Mucosa of descending colon (tissue), 3 donors: ENCODE measurements at regions of chr2 and their contacts with region 1.

Region 1: GRCh38 chr2:219073413-219074129 is 12.8 kb upstream of the IHH start:
- DNase-seq: peak in 1 of 3 donors; percentile 90
- ATAC-seq: peak; percentile 78
- H3K4me3 ChIP-seq: no peak overlapping the region
- H3K4me1 ChIP-seq: peaks cover 39% of the 10 kb centered on the region
- CTCF ChIP-seq: peak; percentile 47

Region 2: GRCh38 chr2:219119422-219120043 is 46.0 kb after region 1 on chr2:
- intact Hi-C with region 1: loop called in 1 of 2 experiments (anchors 5 kb)
- DNase-seq: peak; percentile 57 to 90 (median 70)
- ATAC-seq: peak; percentile 13
- H3K4me3 ChIP-seq: no peak overlapping the region
- H3K4me1 ChIP-seq: peaks cover 63% of the 10 kb centered on the region
- CTCF ChIP-seq: peak; percentile 35